CD4-positive, alpha-beta memory T cell (primary cell): ENCODE measurements at regions of chr12 and their contacts with region 1.

Region 1: DNA sequence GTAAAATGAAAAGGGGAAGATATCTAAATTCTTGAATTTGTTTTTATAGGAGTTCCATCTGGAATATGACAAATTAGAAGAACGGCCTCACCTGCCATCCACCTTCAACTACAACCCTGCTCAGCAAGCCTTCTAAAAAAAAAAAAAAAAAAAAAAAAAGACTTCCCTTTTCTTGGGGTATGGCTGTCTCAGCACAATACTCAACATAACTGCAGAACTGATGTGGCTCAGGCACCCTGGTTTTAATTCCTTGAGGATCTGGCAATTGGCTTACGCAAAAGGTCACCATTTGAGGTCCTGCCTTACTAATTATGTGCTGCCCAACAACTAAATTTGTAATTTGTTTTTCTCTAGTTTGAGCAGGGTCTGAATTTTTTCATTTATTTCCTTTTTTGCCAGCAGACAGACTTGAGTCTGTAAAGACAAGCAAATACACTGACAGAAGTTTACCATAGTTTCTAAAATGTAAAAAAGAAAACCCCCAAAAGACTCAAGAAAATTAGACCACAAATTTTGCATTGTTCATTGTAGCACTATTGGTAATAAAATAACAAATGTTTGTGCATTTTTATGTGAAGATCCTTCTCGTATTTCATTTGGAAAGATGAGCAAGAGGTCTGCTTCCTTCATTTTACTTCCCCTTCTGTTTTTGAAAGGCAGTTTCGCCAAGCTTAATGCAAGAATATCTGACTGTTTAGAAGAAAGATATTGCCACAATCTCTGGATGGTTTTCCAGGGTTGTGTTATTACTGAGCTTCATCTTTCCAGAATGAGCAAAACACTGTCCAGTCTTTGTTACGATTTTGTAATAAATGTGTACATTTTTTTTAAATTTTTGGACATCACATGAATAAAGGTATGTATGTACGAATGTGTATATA is 12.1 kb upstream of the KCNMB4 start:
- DNase-seq: no peak
- H3K4me3 ChIP-seq: no peak overlapping the region
- H3K4me3 Mint-ChIP-seq: no peak overlapping the region
- H3K27ac ChIP-seq: no peak overlapping the region
- H3K27ac Mint-ChIP-seq: no peak overlapping the region
- H3K4me1 ChIP-seq: no peaks in the 10 kb centered on the region
- H3K4me1 Mint-ChIP-seq: peaks cover 0 to 2% (median under 1%) of the 10 kb centered on the region in 4 donors
- H3K27me3 ChIP-seq: no peaks in the 10 kb centered on the region
- H3K27me3 Mint-ChIP-seq: no peaks in the 10 kb centered on the region

Region 2: DNA sequence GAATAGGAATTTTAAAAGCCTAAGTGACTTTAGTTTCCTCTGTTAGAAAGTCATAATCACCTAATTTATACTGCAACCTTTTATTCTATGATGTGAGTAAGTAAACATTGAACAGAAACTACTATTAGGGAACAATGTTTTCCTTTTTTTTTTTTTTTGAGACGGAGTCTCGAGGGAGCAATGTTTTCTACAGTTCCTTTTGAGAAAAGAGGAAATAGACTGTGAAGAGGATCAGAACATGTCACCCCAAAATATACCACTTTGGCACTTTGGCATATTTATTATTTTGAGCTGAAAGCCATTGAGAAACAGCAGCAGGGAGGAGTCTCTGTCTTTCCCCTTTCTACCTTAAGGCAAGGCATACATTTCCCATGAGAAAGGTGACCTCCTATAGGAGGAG is 273.5 kb before region 1 on chr12:
- CTCF ChIA-PET with region 1: no interaction called
- POLR2A ChIA-PET with region 1: no interaction called
- intact Hi-C with region 1: no loop called
- DNase-seq: no peak
- H3K4me3 ChIP-seq: no peak overlapping the region
- H3K4me3 Mint-ChIP-seq: no peak overlapping the region
- H3K27ac ChIP-seq: no peak overlapping the region
- H3K27ac Mint-ChIP-seq: no peak overlapping the region
- H3K4me1 ChIP-seq: no peaks in the 10 kb centered on the region
- H3K4me1 Mint-ChIP-seq: peaks cover 0 to 3% (median 0%) of the 10 kb centered on the region in 4 donors
- H3K27me3 ChIP-seq: no peaks in the 10 kb centered on the region
- H3K27me3 Mint-ChIP-seq: peaks cover 0 to 5% of the 10 kb centered on the region in 2 donors

Region 3: GRCh38 chr12:70330159-70330558 is 23.9 kb before region 1 on chr12:
- CTCF ChIA-PET with region 1: no interaction called
- POLR2A ChIA-PET with region 1: no interaction called
- intact Hi-C with region 1: no loop called
- DNase-seq: no peak
- H3K4me3 ChIP-seq: no peak overlapping the region
- H3K4me3 Mint-ChIP-seq: no peak overlapping the region
- H3K27ac ChIP-seq: no peak overlapping the region
- H3K27ac Mint-ChIP-seq: no peak overlapping the region
- H3K4me1 ChIP-seq: peaks cover 3% of the 10 kb centered on the region
- H3K4me1 Mint-ChIP-seq: peaks cover 23 to 35% (median 32%) of the 10 kb centered on the region in 4 donors
- H3K27me3 ChIP-seq: no peaks in the 10 kb centered on the region
- H3K27me3 Mint-ChIP-seq: no peaks in the 10 kb centered on the region

Region 4: DNA sequence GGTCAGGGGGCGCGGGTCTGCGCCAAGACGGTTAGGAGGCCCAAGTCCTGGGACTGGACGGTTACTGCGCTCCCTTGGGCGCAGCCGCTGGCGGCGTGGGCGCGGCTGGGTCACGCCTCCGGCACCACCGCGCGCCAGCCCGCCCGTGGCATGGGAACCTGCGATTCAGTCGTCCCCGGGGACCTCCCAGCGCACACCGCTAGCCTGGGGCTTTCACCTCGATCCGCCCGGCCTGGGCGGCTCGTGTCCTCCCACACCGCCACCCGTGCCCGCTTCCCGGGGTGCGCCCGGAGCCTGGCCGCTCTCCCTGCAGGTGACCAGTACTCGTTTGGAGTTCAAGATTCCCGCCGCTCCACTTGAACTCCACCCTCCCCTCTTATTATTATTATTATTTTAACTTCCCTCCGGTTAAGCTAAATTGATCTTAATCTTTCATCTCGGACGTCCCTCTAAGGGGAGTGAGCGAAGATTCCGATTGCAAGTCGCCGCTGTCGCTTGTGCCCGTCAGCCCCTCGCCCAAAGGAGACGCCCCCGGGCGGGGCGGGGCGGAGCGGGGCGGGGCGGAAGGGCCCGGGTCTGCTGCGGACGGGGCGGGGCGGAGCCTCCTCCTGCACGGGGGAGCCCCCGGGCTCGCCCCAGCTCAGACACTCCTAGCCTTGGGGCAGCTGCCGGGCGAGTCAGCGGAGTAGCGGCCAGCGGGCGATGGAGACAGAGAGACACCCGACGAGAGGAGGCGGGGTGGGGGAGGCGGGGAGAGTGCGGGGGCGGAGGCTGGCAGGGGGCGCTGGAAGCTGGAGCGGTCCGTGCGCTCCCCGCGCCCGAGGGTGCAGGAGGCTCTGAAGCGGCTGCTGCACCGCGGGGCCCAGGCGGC is 11.9 kb after region 1 on chr12 and contains the start of gene KCNMB4:
- CTCF ChIA-PET with region 1: no interaction called
- POLR2A ChIA-PET with region 1: interaction called, 5 read pairs
- intact Hi-C with region 1: loop called (anchors 1 kb)
- DNase-seq: peak; percentile 59 to 78 (median 63)
- H3K4me3 ChIP-seq: peak within 1 kb of the TSS; percentile 11 to 78
- H3K4me3 Mint-ChIP-seq: peak within 1 kb of the TSS; percentile 92 to 99 (median 94)
- H3K27ac ChIP-seq: peak within 1 kb of the TSS; percentile 3
- H3K27ac Mint-ChIP-seq: peak within 1 kb of the TSS in 6 of 7 donors; percentile 65 to 89 (median 85)
- H3K4me1 ChIP-seq: peaks cover 14% of the 10 kb centered on the region
- H3K4me1 Mint-ChIP-seq: peaks cover 8 to 22% (median 18%) of the 10 kb centered on the region in 4 donors
- H3K27me3 ChIP-seq: peaks cover 8% of the 10 kb centered on the region
- H3K27me3 Mint-ChIP-seq: peaks cover 2 to 4% of the 10 kb centered on the region in 2 donors
- total RNA-seq, gene KCNMB4: 0.67 to 1.1 TPM